ENCODE measurements at regions of chr7 and their contacts with region 1.

Region 1: GRCh38 chr7:56471811-56472210 is 355.6 kb upstream of the NUPR2 start:
- DNase-seq: no peak
- H3K4me3 Mint-ChIP-seq: no peak overlapping the region
- H3K27ac Mint-ChIP-seq: no peak overlapping the region
- H3K4me1 Mint-ChIP-seq: no peaks in the 10 kb centered on the region
- H3K27me3 Mint-ChIP-seq: no peaks in the 10 kb centered on the region

Region 2: DNA sequence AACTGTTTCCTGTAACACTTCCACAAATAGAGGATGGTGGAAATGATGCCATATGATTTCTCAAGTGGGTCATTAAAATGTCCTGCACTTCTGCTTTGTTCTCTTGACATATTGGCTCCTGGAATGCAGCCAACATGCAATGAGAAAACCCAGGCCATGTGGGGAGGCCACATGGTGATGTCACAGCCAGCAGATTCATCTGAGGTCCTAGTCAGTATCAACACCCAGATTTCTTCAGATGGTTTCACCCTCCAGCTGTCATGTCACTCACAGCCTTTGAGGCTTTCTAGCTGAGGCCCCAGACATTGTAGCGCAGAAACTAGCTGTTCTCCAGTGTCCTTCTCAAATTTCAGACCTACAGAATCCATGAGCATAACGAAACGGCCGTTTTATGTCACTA is 253.3 kb before region 1 on chr7:
- intact Hi-C with region 1: loop called (anchors 10 kb)
- DNase-seq: no peak
- H3K4me3 Mint-ChIP-seq: no peak overlapping the region
- H3K27ac Mint-ChIP-seq: no peak overlapping the region
- H3K4me1 Mint-ChIP-seq: no peaks in the 10 kb centered on the region
- H3K27me3 Mint-ChIP-seq: no peaks in the 10 kb centered on the region

Measured in activated T-helper 1 cell treated with anti-CD3 and anti-CD28 coated beads, Interleukin-12 subunit alpha, Interleukin-12 subunit beta, Interleukin-2, Interleukin-4 antibody, amounts not matched to agents 30 ng/mL and 10 ng/mL and 1 ng/mL, durations not matched to agents 14 hours and 24 hours and 36 hours (primary cell).